ENCODE measurements at regions of chr9 and their contacts with region 1.

Region 1: DNA sequence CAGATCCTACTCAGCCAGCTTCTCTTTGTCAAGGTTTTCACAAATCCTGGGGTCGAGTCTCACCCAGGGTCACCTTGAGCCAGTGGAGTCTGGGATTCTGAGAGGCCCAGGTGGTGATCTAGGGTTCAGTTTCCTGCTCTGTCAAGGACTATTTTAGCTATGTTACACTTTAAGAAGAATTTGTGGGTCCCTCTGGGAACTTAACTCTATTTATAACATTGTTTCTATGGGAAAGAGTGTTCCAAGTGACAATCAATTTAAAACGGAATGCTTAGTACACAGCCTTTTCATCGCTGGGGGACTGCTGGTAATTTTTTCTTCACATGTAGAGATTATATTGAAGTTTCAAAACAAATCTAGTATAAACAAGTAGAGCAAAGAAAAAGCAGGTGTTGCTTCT is 26.9 kb upstream of the TMEM252 start:
- H3K4me3 ChIP-seq: no peak overlapping the region
- H3K27ac ChIP-seq: no peak overlapping the region
- H3K4me1 ChIP-seq: no peaks in the 10 kb centered on the region
- CTCF ChIP-seq: no peak

Region 2: DNA sequence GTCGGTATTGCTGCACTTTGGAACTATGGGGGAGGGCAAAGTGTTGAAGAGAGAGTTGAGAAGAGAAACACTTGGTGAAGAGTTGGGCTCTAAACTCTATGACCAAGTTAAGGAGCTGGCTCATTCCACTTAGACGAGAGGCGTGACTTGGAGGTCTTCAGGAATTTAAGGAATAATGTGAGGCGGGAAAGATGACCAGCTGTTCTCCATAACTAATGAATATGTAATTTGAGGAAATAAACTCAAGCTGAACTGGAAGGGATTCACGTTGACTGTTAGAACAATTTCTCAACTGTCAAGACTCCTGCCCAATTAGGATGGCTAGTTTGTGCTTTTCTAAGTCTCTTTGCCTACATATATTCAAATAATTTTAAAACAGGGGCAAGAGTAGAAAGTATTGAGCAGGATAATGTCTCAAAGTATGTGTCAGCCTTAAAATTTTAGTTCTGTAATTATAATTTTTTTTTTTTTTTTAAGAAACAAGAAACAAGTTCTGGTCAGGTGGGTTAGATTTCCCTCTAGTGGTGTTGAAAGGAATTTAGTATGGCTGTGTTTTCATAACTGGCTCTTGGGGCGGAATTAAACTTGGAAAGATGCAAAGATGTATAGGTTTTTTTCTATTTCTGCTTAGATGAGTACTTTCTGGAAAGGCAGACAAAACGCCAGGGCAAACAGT is 60.3 kb before region 1 on chr9:
- CTCF ChIA-PET with region 1: interaction called, 18 read pairs
- POLR2A ChIA-PET with region 1: no interaction called
- H3K4me3 ChIP-seq: no peak overlapping the region
- H3K27ac ChIP-seq: no peak overlapping the region
- H3K4me1 ChIP-seq: no peaks in the 10 kb centered on the region
- CTCF ChIP-seq: no peak

Region 3: DNA sequence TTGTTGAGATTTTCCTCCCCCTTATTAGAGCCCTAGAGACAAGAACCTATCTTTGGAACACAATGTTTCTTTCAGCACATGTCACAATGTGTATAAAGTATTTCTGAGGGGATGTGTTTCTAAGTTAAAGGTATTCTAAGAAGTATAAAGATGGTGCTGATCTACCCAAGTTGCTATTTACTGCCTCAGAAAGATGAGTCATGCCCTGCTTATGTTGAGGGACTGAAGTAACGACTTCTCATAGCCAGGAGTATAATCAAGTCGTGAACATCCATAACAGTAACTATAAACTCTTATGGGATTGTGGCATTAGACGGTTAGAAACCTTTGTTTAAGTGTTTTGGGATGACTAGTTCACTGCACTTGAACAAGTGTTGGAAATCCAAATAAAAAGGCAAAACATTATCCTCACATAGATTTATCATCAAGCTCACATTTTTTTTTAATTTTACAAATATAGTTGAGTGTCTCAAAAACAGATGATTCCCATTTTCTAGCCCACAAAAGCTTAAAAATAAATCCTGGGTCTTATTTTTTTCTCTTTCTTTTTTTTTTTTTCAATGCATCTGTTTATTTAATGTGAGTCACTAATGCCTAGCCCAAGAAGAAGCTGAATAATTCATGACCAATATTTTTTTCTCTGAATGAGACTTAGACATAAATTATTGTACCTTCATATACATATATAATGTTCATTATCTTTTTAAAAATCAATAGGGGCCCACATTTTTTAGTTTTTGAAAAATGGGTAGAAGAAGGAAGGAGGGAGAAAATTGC is 14.7 kb before region 1 on chr9:
- CTCF ChIA-PET with region 1: interaction called, 10 read pairs
- POLR2A ChIA-PET with region 1: no interaction called
- H3K4me3 ChIP-seq: no peak overlapping the region
- H3K27ac ChIP-seq: no peak overlapping the region
- H3K4me1 ChIP-seq: no peaks in the 10 kb centered on the region
- CTCF ChIP-seq: no peak

Region 4: GRCh38 chr9:68577774-68578591 is 10.4 kb after region 1 on chr9:
- CTCF ChIA-PET with region 1: interaction called, 45 read pairs
- POLR2A ChIA-PET with region 1: no interaction called
- H3K4me3 ChIP-seq: no peak overlapping the region
- H3K27ac ChIP-seq: no peak overlapping the region
- H3K4me1 ChIP-seq: no peaks in the 10 kb centered on the region
- CTCF ChIP-seq: no peak

Measured in HEK293 (cell line).